ENCODE measurements at regions of chr10 and their contacts with region 1.

Region 1: DNA sequence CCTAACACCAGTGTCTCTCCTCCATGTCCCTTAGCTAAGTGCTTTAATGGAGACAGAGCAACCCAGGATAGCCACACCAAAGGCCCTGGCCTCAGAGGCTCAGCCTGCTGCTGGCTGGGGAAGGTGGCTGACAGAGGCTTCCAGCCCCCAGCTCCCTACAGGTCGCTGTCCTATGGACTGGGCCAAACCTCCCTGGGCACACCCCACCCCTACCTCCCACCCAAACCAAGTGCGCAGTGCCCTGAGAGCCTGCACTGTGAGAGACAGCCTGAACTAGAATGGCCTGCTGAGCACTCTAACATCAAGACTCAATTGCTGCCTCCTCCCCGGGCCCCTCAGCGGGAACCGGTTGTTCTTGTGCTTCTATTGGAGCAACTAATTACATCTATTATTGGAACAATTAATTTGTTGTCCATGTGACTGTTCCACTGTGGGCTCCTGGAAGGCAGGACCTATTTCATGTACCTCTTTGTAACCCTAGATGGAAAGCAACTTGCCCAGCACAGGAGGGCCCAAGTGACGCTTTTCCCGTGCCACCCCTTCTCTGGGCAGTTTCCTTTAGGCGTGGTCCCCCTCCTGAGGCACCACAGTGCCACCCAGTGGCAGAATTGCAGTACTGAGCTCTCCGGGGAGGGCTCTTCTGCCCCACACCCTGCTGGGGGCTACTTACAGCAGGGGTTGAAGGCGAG is 63.6 kb upstream of the WAPL start:
- DNase-seq: peak; percentile 61
- ATAC-seq: peak; percentile 94
- H3K4me3 ChIP-seq: no peak overlapping the region
- H3K27ac ChIP-seq: no peak overlapping the region
- H3K4me1 ChIP-seq: peaks cover 6 to 8% of the 10 kb centered on the region in 2 experiments; a peak in 3 of 4 replicates
- H3K27me3 ChIP-seq: no peaks in the 10 kb centered on the region
- CTCF ChIP-seq: peak; percentile 92 to 97 (median 95)
- POLR2A ChIP-seq: no peak
- RAD21 ChIP-seq: peak; percentile 97

Region 2: DNA sequence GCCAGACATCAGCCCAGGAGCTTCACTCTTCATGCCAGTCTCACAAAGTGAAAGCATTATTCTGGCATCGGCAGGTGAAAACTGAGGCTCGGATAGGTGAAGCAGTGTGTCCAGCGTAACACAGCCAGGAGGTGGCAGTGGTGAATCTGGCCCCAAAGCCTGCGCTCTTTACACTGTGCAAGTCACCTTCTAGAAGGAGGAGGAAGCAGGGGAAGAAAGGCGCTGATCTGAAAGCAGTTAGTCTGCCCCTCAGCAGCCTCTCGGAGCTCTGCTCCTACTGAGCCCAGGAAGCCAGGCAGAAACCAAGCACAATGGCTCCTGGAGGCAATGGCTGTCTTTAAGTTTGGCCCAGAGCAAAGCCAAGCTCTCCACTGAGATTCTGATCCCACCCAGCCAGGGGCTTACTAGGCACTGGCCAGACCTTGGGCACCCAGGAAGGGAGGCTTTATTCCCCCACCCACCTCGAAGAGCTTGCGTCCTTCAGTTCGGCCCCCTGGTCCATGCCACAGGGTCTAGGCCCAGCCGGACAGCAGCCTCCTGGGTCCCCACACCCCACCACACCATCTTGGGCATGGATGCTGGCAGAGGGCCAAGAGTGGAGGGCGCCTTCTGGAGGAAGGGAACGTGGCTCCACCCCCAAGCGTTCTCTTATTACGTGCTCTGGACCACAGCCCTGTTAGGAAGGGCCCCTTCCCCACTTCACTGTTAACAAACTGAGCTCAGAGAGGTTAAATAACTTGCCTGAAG is 323.1 kb before region 1 on chr10:
- CTCF ChIA-PET with region 1: no interaction called
- POLR2A ChIA-PET with region 1: no interaction called
- RAD21 ChIA-PET with region 1: no interaction called
- intact Hi-C with region 1: loop called (anchors 5 kb)
- DNase-seq: no peak
- ATAC-seq: peak; percentile 97
- H3K4me3 ChIP-seq: no peak overlapping the region
- H3K27ac ChIP-seq: no peak overlapping the region
- H3K4me1 ChIP-seq: peaks cover 0 to 8% of the 10 kb centered on the region in 2 experiments; a peak in 2 of 4 replicates
- H3K27me3 ChIP-seq: no peaks in the 10 kb centered on the region
- CTCF ChIP-seq: peak; percentile 61 to 69 (median 65)
- POLR2A ChIP-seq: no peak
- RAD21 ChIP-seq: peak; percentile 72

Region 3: GRCh38 chr10:86312701-86313516 is 272.3 kb before region 1 on chr10:
- CTCF ChIA-PET with region 1: no interaction called
- POLR2A ChIA-PET with region 1: no interaction called
- RAD21 ChIA-PET with region 1: no interaction called
- intact Hi-C with region 1: no loop called
- DNase-seq: no peak
- ATAC-seq: peak; percentile 44; the same call in 1 of the 2 replicates
- H3K4me3 ChIP-seq: no peak overlapping the region
- H3K27ac ChIP-seq: no peak overlapping the region
- H3K4me1 ChIP-seq: peaks cover 0 to 3% of the 10 kb centered on the region in 2 experiments; a peak in 2 of 4 replicates
- H3K27me3 ChIP-seq: no peaks in the 10 kb centered on the region
- CTCF ChIP-seq: no peak
- POLR2A ChIP-seq: no peak
- RAD21 ChIP-seq: no peak

Region 4: GRCh38 chr10:86355571-86356038 is 229.6 kb before region 1 on chr10:
- CTCF ChIA-PET with region 1: no interaction called
- POLR2A ChIA-PET with region 1: no interaction called
- RAD21 ChIA-PET with region 1: no interaction called
- intact Hi-C with region 1: no loop called
- DNase-seq: no peak
- ATAC-seq: no peak
- H3K4me3 ChIP-seq: no peak overlapping the region
- H3K27ac ChIP-seq: no peak overlapping the region
- H3K4me1 ChIP-seq: no peaks in the 10 kb centered on the region
- H3K27me3 ChIP-seq: no peaks in the 10 kb centered on the region
- CTCF ChIP-seq: no peak
- POLR2A ChIP-seq: no peak
- RAD21 ChIP-seq: no peak

Region 5: DNA sequence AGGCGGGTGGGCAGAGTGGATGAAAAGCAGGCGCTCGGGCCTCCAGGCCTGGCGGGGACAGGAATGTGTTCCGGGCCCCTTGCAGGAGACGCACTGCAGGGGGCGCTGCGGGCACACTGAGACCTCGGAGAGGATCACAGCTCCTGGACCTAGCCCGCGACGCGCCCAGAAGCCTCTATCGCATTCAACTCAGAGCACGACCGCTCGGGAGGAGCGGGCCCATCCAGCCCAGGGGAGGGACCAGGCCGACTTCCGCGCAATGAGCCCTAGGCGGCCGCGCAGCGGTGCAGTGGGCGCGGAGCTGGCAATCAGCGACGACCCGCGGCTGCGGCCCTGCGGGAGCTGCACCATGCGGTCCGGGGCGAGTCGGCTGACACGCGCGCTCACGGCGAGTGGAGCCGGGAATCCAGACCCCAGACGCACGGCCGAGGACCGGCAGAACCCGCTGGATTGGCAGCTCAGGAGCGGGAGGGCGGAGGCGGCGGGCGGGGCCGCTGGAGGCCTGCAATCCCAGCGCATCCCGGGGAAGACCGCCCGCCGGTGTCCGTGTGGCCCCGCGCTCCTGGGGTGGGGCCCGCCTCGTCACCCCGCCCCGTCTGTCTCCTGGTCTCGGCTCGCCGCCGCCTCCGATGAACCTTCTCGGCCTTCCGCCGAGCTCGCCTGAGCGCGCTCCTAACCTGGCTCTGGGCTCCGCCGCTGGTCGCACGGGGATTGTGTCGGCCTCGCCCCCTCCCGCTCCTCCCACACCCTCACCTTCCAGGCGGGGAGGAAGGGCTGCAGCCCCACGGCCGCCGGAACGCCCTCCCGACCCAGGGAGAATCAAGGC is 185.1 kb before region 1 on chr10:
- CTCF ChIA-PET with region 1: interaction called, 46 read pairs
- POLR2A ChIA-PET with region 1: no interaction called
- RAD21 ChIA-PET with region 1: interaction called, 10 to 16 read pairs
- intact Hi-C with region 1: loop called (anchors 1 kb)
- DNase-seq: peak; percentile 91
- ATAC-seq: peak; percentile 90
- H3K4me3 ChIP-seq: peak overlapping the region; percentile 64 to 73
- H3K27ac ChIP-seq: peak overlapping the region; percentile 85
- H3K4me1 ChIP-seq: peaks cover 15 to 31% of the 10 kb centered on the region in 2 experiments
- H3K27me3 ChIP-seq: no peaks in the 10 kb centered on the region
- CTCF ChIP-seq: peak; percentile 90 to 91 (median 91)
- POLR2A ChIP-seq: peak; percentile 46
- RAD21 ChIP-seq: peak; percentile 97

Region 6: DNA sequence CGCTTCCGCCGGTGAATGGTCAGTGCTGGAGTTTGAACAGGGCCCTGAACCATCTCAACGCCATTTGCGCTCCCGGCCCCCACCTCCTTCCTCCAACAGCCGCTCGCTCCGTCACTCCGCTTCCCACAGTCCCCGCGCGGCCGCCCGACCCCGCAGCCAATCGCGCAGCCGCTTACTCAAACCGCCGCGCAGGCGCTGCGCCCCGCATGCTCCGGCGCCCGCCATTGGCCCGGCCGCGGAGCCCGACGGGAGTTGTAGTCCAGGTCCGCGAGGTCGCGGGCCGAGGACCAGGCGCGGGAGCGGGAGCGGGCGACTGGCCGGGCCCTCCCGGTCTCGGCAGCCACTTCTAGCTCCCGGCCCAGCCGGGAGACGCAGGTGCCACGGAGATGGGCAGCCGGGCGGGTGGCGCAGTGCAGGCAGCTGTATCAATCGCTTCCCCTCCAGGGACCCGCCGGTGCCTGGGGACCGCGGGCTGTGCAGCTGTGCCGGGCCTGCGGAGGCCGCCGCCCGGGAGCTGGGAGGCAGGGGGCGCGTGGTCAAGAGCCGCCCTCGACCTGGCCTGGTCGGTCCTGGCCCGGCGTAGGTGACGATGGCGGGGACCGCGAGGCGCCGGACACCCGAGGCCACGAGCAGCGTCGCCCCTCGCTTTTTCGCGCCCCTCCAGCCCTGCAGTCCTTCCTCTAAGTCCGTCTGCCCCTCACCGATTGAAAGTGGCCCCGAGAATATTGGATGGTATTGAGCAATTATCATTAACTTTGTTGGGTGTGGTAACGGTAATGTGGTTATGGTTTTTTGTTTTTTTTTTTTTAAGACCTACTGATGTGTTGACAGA is 63.3 kb before region 1 on chr10 and contains the start of gene WAPL:
- CTCF ChIA-PET with region 1: interaction called, 3 read pairs
- POLR2A ChIA-PET with region 1: no interaction called
- RAD21 ChIA-PET with region 1: no interaction called
- intact Hi-C with region 1: loop called (anchors 1 kb)
- DNase-seq: peak; percentile 81
- ATAC-seq: peak; percentile 93
- H3K4me3 ChIP-seq: peak within 1 kb of the TSS; percentile 82 to 84
- H3K27ac ChIP-seq: peak within 1 kb of the TSS; percentile 85
- H3K4me1 ChIP-seq: peaks cover 12 to 22% of the 10 kb centered on the region in 2 experiments; a peak in 3 of 4 replicates
- H3K27me3 ChIP-seq: no peaks in the 10 kb centered on the region
- CTCF ChIP-seq: no peak
- POLR2A ChIP-seq: peak; percentile 39
- RAD21 ChIP-seq: no peak
- total RNA-seq, gene WAPL: 37.5 TPM

Region 7: DNA sequence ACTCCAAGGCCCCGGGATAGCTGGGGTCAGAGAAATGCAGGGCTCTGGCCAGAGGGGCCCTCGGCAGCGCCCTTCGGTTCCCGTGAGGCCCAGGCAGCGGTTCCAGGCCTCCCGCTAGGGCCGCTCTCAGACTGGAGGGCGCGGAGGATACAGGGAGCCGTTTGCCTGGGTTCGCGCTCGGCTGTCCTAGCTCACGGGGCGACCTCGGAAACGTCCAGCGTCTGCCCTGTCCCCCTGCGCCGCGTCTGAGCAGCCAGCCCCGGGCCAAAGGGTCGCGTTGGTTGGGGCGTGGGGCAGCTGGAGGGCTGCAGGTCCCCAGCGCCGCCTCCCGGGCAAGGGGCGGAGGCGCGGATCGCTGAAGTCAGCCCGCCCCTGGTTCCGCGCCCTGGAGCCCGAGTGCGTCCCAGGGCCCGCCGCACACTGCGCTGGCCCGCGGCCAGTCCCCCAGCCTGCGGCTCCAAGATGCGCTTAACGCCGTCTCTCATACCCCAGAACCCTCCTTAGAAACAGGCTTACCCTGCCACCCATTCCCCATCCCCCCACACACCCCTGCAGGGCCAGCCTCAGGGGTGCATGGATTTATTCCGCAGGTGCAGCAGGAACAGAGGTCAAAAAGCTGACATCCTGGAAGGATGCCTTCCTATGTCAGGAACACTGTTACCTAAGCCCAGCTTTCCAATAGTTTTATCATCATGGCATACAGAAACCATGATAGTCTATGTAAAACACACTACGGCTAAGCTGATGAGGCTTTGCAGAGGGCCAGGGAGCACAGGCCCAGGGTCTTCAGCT is 47.0 kb after region 1 on chr10:
- CTCF ChIA-PET with region 1: no interaction called
- POLR2A ChIA-PET with region 1: no interaction called
- RAD21 ChIA-PET with region 1: no interaction called
- intact Hi-C with region 1: no loop called
- DNase-seq: no peak
- ATAC-seq: no peak
- H3K4me3 ChIP-seq: no peak overlapping the region
- H3K27ac ChIP-seq: no peak overlapping the region
- H3K4me1 ChIP-seq: peaks cover 0 to 5% of the 10 kb centered on the region in 2 experiments; a peak in 1 of 4 replicates
- H3K27me3 ChIP-seq: 0 out of 2 replicates have a peak, but pooled peaks cover 6% of the 10 kb centered on the region
- CTCF ChIP-seq: no peak
- POLR2A ChIP-seq: no peak
- RAD21 ChIP-seq: no peak

Region 8: DNA sequence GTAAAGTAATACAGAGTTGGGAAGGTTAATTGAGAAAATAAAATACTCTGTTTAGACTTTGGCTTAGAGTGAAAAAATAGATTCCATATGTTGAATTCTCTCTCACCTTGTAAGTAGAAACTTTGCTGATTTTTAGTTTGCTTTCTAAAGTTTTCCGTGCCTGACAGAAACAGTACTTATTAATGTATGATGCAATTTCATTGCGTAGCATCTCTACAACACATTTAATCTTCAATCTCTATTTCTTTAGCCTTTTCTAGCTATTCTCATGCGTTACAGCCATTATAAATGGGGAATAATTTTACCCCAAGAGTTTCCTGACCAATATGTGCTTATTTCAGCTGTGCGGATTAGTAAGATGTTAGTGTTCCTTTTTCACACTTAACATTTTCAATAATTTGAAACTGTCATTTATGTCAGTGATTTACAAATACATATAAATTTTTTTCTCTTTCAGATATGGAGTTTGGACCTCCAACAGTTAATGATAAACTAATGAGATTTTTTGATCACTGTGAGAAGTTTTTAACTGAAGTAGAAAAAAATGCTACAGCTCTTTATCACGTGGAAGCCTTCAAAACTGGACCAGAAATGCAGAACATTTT is 922.8 kb after region 1 on chr10:
- CTCF ChIA-PET with region 1: no interaction called
- POLR2A ChIA-PET with region 1: no interaction called
- RAD21 ChIA-PET with region 1: no interaction called
- intact Hi-C with region 1: no loop called
- DNase-seq: no peak
- ATAC-seq: no peak
- H3K4me3 ChIP-seq: no peak overlapping the region
- H3K27ac ChIP-seq: no peak overlapping the region
- H3K4me1 ChIP-seq: peaks cover 10 to 17% of the 10 kb centered on the region in 2 experiments
- H3K27me3 ChIP-seq: no peaks in the 10 kb centered on the region
- CTCF ChIP-seq: no peak
- POLR2A ChIP-seq: no peak
- RAD21 ChIP-seq: no peak